ENCODE measurements at regions of chr14 and their contacts with region 1.

Region 1: DNA sequence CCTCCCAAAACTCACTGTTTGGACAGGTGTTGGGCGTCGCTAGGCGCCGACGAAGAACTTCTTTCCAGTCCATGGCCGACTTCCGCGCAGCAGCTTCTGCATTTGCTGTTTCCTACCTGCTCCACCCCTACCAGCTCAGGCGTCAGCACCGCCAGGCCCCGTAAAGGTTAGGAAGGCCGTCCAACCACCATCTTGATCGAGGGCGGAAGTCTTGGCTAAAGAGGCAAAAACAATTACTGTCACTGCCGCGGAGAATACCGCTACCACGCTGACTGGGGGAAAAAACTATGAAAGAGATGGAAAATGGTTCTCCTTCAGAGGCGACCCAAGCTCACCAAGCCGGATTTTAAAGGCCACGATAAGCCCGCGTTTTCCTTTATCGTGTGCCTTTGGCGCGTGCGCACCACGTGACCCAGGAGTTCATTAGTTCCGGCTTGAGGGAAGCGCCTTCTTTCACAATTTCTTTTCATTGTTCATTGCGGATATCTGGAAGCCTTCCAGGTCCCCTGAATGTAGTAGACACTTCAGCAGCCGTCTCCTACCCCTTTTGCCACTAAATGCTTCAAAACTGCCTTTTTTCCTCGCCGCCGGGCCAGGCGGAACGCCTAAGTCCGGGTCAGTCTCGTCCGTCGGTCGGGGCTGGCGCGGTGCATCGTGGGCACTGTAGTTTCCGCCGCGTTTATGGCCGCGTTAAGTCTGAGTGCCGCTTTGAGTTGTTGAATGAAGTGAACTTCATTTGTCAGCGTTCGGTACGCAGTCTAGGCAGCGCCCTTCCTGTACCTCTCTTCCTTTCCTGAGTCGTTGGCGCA is at the starts of genes PPP2R3C and PRORP:
- DNase-seq: peak; percentile 93
- H3K4me3 Mint-ChIP-seq: peak within 1 kb of the TSS; percentile 82
- H3K27ac Mint-ChIP-seq: peak within 1 kb of the TSS; percentile 99
- H3K4me1 Mint-ChIP-seq: peaks cover 55% of the 10 kb centered on the region
- H3K27me3 Mint-ChIP-seq: no peaks in the 10 kb centered on the region
- total RNA-seq, gene PPP2R3C: 48.9 to 51.8 TPM
- total RNA-seq, gene PRORP: 43.4 to 44.6 TPM

Region 2: DNA sequence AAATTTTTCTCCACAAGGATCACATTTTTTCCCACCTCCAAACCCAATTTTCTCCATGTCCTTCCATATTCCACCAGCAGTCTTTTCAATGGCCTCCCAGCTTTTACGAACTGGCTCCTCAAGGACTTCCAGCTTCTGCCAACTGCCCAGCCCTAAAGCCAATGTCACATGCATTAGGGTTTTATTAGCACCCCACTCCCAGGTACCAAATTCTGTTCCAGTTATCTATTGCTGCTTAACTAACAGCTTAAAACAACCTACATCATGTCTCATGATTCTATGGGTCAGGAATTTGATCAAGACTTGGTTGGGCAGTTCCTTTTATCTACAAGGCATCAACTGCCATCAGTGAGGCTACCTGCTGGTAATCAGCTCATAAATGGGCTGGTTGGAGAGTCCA is 811.4 kb before region 1 on chr14:
- CTCF ChIA-PET with region 1: no interaction called
- POLR2A ChIA-PET with region 1: no interaction called
- intact Hi-C with region 1: no loop called
- DNase-seq: no peak
- H3K4me3 Mint-ChIP-seq: no peak overlapping the region
- H3K27ac Mint-ChIP-seq: no peak overlapping the region
- H3K4me1 Mint-ChIP-seq: no peaks in the 10 kb centered on the region
- H3K27me3 Mint-ChIP-seq: peaks cover 7% of the 10 kb centered on the region

Region 3: DNA sequence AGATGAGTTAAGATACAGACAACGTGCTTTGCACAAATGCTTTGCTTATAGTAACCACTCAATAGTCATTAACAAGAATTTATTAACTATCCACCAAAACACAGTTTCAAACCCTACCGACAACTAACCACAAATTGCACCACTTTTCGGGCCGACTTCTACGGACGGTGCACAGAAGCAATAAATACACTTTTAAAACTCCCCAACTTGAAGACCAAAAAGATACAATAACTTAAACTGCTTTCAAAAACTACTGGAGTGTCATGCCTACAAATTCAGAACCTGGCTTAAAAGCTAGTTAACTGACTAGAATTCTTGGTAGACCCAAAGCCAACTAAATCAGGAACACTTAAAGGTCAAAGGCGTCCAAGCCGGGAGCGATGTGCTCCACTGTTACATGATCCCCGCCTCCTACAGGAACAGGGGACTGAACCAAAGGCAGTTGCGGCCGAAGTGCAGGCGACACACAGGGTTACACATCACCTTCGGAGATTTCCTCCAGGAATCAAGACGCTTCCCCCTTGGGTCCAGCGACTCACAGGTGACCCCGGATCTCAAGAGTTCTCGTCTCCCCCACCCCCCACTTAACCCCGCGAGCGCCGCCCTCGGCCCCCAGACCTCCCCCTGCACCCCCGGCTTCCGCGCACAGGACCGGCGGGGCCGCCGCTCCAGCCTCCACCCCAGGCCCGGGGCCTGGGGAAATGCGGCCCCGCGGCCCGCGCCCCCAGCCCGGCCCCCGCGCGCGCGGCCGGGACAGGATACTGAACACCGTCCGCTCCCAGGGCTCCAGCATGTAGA is 660.6 kb before region 1 on chr14:
- CTCF ChIA-PET with region 1: no interaction called
- POLR2A ChIA-PET with region 1: no interaction called
- intact Hi-C with region 1: loop called (anchors 5 kb)
- DNase-seq: peak; percentile 46
- H3K4me3 Mint-ChIP-seq: peak overlapping the region; percentile 91
- H3K27ac Mint-ChIP-seq: peak overlapping the region; percentile 76
- H3K4me1 Mint-ChIP-seq: peaks cover 14% of the 10 kb centered on the region
- H3K27me3 Mint-ChIP-seq: no peaks in the 10 kb centered on the region

Region 4: DNA sequence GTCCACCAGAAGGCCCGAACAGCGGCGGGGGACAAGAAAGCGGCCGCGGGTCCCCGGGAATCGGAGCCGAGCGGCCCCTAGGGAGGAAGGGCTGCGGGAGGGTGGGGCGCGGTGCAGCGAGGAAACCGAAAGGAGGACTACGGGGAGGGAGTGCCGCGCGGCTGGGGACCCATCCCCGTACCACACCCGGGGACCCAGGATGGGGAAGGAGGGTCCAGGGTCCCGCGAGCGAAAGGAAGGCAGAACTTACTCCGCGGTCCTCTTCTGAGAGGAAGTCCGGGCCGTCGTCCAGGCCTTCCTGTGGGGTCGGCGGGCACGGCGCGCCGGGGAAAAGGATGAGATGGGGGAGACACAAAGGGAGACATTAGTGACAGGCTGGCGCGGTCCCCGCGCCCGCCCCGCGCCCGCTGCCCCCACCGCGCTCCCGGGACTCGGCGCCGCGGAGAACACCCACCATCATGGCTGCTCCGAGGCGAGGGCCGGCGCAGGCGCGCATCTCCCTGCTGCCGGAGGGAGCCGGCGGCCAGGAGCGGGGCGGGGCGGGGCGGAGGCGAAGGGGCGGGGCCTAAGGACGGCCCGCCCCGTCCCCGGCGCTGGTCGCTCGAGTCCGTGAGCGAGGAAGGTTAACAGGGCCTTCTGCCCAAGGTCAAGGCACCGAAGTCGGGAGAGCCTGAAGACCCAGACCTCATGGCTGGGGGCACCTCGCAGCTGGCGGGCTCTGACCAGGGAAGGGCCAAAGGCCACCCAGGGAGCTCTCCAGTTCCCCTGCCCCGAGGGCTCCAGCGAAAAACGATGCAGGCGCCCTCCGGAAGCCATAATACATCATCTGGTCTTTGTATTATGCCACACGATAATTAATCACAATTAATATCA is 492.2 kb before region 1 on chr14 and contains the start of gene SNX6:
- CTCF ChIA-PET with region 1: no interaction called
- POLR2A ChIA-PET with region 1: no interaction called
- intact Hi-C with region 1: loop called (anchors 2 kb)
- DNase-seq: peak; percentile 89
- H3K4me3 Mint-ChIP-seq: peak within 1 kb of the TSS; percentile 90
- H3K27ac Mint-ChIP-seq: peak within 1 kb of the TSS; percentile 87
- H3K4me1 Mint-ChIP-seq: peaks cover 29% of the 10 kb centered on the region
- H3K27me3 Mint-ChIP-seq: peaks cover 2% of the 10 kb centered on the region
- total RNA-seq, gene SNX6: 82.0 to 86.9 TPM

Region 5: GRCh38 chr14:34875031-34875922 is 246.8 kb before region 1 on chr14 and contains the start of gene BAZ1A:
- CTCF ChIA-PET with region 1: no interaction called
- POLR2A ChIA-PET with region 1: interaction called, 4 read pairs
- intact Hi-C with region 1: loop called (anchors 1 kb)
- DNase-seq: peak; percentile 52
- H3K4me3 Mint-ChIP-seq: peak within 1 kb of the TSS; percentile 100
- H3K27ac Mint-ChIP-seq: peak within 1 kb of the TSS; percentile 98
- H3K4me1 Mint-ChIP-seq: peaks cover 33% of the 10 kb centered on the region
- H3K27me3 Mint-ChIP-seq: no peaks in the 10 kb centered on the region
- total RNA-seq, gene BAZ1A: 67.8 to 68.0 TPM

Region 6: DNA sequence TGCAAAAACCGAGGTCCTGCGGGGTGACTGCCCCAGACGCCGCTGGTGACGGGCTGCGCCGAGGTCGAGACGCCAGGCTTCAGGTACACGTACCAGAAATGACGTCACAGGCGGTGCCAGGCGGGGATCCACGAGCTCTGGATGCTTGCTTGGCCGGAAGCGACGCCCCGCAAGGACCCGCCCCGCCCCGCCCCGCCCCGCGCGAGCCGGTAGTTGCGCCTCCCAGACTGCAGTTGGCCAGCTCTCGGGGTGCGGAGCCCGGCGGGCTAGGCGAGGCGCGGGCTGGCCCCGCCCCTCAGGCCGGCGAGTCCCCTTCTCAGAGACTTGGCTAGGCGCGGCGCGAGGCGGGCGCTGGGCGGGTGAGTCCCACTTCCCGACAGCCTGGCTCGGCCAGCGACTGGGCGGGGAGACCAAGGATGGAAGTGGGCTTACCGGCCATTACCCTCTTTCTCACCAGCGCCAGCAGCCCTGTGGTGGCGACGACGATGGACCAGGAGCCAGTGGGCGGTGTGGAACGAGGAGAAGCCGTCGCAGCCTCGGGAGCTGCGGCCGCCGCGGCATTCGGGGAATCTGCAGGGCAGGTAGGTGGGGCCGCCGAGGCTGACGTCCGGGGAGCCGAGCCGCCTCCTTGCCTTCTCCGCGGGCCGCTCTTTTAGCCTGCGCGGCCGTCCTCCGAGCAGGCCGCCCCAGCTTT is 75.9 kb before region 1 on chr14 and contains the start of gene FAM177A1:
- CTCF ChIA-PET with region 1: no interaction called
- POLR2A ChIA-PET with region 1: interaction called, 16 read pairs
- intact Hi-C with region 1: loop called (anchors 1 kb)
- DNase-seq: peak; percentile 99
- H3K4me3 Mint-ChIP-seq: peak within 1 kb of the TSS; percentile 97
- H3K27ac Mint-ChIP-seq: peak within 1 kb of the TSS; percentile 98
- H3K4me1 Mint-ChIP-seq: peaks cover 28% of the 10 kb centered on the region
- H3K27me3 Mint-ChIP-seq: no peaks in the 10 kb centered on the region
- total RNA-seq, gene FAM177A1: 48.8 to 56.8 TPM

Region 7: DNA sequence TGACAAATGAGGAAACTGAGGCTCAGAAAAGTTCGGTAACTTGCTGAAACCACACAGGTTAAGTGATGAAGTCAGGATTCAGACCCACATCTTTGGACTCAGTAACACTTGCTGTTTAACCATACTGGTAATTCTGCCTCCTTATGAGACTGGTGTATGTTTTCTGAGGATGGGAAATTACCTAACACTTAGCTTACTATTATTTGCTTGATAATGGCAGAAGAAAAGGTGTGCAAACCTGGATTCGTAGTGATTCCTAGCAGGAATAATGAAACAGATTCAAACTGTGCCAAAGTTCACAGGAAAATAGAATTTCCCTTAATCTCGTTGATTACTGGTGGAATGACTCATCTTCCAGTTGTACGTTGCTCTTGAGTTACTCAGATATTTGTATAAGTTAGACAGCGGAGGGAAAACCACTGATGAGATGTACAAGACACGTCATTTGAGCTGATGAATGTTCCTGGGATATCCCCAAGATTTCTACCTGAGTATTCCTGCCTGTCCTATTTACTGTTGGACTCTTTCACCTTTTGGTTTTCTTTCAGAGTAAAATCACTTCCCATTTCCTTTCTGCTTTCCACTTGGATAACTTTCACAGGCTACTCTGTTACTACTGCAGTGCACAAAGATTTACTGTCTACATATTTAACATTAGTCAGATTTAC is 37.8 kb after region 1 on chr14:
- CTCF ChIA-PET with region 1: no interaction called
- POLR2A ChIA-PET with region 1: no interaction called
- intact Hi-C with region 1: loop called (anchors 1 kb)
- DNase-seq: no peak
- H3K4me3 Mint-ChIP-seq: peak overlapping the region; percentile 16
- H3K27ac Mint-ChIP-seq: peak overlapping the region; percentile 79
- H3K4me1 Mint-ChIP-seq: peaks cover 57% of the 10 kb centered on the region
- H3K27me3 Mint-ChIP-seq: no peaks in the 10 kb centered on the region